Mammary epithelial cell (primary cell): ENCODE measurements at regions of chr19 and their contacts with region 1.

Region 1: DNA sequence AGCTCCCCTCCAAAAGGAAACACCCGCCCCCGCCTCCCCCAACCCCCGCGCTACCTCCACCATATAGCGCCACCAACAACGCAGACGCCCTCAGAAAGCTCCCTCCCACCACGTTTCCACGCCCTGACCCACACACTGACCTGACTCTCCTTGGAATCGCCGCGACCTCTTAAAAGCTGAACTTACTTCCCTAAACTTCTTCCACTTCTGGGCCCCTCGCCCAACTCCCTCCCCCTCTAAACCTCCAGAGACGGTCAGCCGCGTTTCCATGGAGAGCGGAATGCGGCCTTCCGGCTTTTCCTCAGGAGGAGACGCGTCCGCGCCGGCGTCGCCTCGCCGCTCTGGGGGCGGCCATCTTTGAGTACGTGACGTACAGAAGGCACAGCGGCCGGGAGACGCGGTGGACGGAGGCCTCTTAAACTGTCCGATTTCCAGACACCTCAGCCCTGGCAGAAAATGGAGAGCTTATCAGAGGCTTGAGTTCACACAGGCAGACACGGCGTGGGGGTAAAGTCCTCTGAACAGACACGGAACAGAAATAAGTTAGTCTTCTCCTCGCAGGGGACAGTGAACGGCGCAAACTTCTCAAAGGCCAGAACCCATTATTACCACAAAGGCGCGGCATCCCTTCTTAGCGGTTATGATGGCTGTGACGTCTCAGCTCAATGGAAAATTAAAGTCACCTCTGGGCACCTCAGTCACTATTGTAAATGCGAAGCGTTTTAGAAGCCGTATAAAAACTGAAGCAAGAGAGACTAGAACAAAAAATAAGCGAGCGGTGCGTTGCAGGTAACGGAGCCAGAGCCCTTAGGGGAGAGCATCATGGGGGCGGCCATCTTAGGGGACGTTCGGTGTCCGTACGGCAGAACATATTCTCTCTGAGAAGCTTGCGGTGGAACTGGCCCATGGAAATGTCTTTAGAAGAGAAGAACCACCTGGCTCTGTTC is at the start of gene ZNF432:
- DNase-seq: peak; percentile 89
- H3K4me3 ChIP-seq: peak within 1 kb of the TSS; percentile 65 to 70 (median 67)
- H3K27ac ChIP-seq: peak within 1 kb of the TSS; percentile 83
- H3K4me1 ChIP-seq: no peaks in the 10 kb centered on the region
- H3K27me3 ChIP-seq: no peaks in the 10 kb centered on the region
- CTCF ChIP-seq: no peak
- total RNA-seq, gene ZNF432: 9.3 to 26.5 TPM

Region 2: DNA sequence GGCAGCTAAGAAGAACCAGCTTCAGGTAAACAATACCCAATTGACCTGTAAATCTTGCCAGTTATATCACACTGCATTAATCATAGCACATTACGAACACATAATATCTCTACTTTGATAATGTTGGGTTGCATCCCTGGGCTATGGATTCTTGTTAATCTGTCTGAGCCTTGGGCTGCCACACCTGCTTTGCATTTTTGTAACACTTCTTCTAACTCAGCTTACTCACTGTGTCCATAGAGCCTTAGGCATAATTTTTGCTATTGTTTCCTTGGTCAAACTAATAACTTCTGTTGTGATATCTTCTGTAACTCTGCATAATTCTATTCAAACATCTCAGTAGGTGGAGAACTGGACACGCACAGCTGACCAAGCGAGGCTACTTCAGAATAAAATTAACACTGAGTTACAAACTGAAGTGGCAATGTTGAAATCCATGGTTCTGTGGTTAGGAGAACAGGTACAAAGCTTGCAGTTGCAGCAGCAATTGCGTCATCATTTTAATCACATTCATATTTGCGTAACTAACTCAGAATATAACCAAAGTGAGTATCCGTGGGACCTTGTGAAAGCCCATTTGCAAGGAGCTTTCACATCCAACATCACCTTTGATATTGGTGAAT is 68.6 kb before region 1 on chr19:
- CTCF ChIA-PET with region 1: no interaction called
- dilution Hi-C with region 1: no loop called
- in situ Hi-C with region 1: no loop called
- intact Hi-C with region 1: no loop called
- DNase-seq: peak; percentile 34
- H3K4me3 ChIP-seq: no peak overlapping the region
- H3K27ac ChIP-seq: no peak overlapping the region
- H3K4me1 ChIP-seq: no peaks in the 10 kb centered on the region
- H3K27me3 ChIP-seq: no peaks in the 10 kb centered on the region
- CTCF ChIP-seq: no peak

Region 3: GRCh38 chr19:52034051-52034728 is 14.6 kb before region 1 on chr19:
- CTCF ChIA-PET with region 1: no interaction called
- dilution Hi-C with region 1: no loop called
- in situ Hi-C with region 1: no loop called
- intact Hi-C with region 1: no loop called
- DNase-seq: no peak
- H3K4me3 ChIP-seq: no peak overlapping the region
- H3K27ac ChIP-seq: no peak overlapping the region
- H3K4me1 ChIP-seq: no peaks in the 10 kb centered on the region
- H3K27me3 ChIP-seq: no peaks in the 10 kb centered on the region
- CTCF ChIP-seq: no peak

Region 4: GRCh38 chr19:52095172-52096014 is 46.6 kb after region 1 on chr19 and contains the start of gene ZNF841:
- CTCF ChIA-PET with region 1: no interaction called
- dilution Hi-C with region 1: no loop called
- in situ Hi-C with region 1: no loop called
- intact Hi-C with region 1: loop called (anchors 2 kb)
- DNase-seq: peak; percentile 93
- H3K4me3 ChIP-seq: peak within 1 kb of the TSS; percentile 77 to 93 (median 90)
- H3K27ac ChIP-seq: peak within 1 kb of the TSS; percentile 88
- H3K4me1 ChIP-seq: peaks cover 3% of the 10 kb centered on the region
- H3K27me3 ChIP-seq: no peaks in the 10 kb centered on the region
- CTCF ChIP-seq: no peak
- total RNA-seq, gene ZNF841: 25.2 to 28.9 TPM

Region 5: DNA sequence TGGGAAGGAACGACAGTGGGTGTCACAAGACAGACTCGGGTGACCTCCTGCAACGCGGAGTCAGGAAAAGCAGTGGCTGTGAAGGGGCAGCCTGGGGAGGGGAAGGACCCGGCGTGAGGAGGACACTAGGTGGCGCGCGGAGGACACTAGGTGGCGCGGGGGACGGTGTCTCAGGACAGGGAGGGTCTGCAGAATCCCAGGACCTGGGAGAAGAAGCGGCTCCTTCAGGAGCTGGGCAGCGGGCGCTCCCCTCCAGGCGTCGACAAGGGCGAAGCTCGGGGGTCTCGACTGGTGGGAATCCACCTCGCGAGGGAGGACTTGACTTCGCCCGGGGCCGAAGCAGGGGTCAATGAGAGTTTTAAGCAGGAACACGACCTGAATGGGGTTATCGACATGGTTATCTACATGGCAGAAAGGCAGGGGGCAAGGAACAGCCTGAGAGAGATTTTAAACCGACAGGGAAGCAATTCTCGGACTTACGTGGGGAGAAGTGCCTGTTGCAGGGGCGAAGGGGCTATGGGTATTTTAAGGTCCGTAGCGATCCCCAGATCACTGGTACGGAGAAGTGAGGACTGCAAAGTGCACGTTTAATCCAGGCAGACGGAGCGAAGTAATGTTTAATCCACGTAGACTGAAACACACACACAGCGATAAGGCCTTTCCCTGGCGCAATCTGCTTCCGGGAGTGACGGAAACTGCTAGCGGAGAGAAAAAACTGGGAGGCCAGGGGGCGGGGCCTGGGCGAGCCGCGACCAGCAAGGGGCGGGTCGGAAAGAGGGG is 90.6 kb after region 1 on chr19 and contains the start of gene ZNF616:
- CTCF ChIA-PET with region 1: no interaction called
- dilution Hi-C with region 1: no loop called
- in situ Hi-C with region 1: no loop called
- intact Hi-C with region 1: loop called (anchors 2 kb)
- DNase-seq: peak; percentile 92
- H3K4me3 ChIP-seq: peak within 1 kb of the TSS; percentile 85 to 86 (median 85)
- H3K27ac ChIP-seq: peak within 1 kb of the TSS; percentile 58
- H3K4me1 ChIP-seq: peaks cover 6% of the 10 kb centered on the region
- H3K27me3 ChIP-seq: no peaks in the 10 kb centered on the region
- CTCF ChIP-seq: peak; percentile 45 to 82
- total RNA-seq, gene ZNF616: 9.7 to 10.3 TPM